Colonic mucosa (tissue), 4 donors: ENCODE measurements at regions of chr6 and their contacts with region 1.

Region 1: DNA sequence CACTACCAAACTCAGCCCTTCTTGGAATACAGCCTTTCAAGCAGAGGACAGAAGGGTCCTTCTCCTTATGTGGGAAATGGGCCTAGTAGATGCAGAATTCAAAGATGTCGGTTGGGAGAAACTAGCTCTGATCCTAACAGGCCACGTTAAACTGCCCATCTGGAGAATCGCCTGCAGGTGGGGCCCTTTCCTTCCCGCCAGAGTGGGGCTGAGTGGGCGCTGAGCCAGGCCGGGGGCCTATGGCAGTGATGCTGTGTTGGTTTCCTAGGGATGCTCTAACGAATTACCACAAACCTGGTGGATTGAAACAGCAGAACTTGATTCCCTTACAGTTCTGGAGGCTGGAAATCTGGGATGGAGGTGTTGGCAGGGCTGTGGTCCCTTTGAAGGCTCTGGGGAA is 9.1 kb downstream of the MAPK13 start:
- DNase-seq: no peak
- H3K4me3 ChIP-seq: no peak overlapping the region
- H3K27ac ChIP-seq: no peak overlapping the region
- H3K4me1 ChIP-seq: no peaks in the 10 kb centered on the region
- H3K27me3 ChIP-seq: no peaks in the 10 kb centered on the region
- CTCF ChIP-seq: no peak

Region 2: GRCh38 chr6:36196880-36197548 is 57.6 kb after region 1 on chr6:
- intact Hi-C with region 1: loop called (anchors 5 kb)
- DNase-seq: peak; percentile 100
- H3K4me3 ChIP-seq: peak overlapping the region; percentile 53
- H3K27ac ChIP-seq: peak overlapping the region; percentile 85
- H3K4me1 ChIP-seq: peaks cover 3% of the 10 kb centered on the region
- H3K27me3 ChIP-seq: no peaks in the 10 kb centered on the region
- CTCF ChIP-seq: no peak

Region 3: DNA sequence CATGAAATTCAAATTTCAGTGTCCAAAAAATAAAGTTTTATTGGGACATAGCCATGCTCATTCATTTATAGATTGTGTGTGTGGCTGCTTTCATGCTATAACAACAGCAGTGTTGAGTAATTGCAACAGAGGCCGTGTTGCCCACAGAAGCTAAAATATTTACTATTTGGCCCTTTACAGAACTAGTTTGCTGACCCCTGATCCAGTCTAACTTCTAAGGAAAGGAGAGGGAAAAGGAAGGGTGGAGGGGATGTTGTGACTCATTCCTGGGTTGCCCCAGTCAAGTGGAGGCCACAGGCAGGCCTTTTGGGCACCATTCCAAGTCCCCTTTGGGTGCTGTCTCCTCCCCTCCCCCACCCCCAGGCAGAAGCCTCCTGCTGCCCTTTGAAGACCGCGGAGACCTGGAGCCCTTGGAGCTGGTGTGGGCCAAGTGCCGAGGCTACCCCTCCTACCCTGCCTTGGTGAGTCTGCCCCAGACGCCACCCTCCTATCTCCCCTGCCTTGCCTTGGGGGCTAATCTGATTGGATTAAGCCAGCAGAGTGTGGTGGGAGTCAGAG is 85.6 kb after region 1 on chr6:
- intact Hi-C with region 1: no loop called
- DNase-seq: no peak
- H3K4me3 ChIP-seq: no peak overlapping the region
- H3K27ac ChIP-seq: no peak overlapping the region
- H3K4me1 ChIP-seq: peaks cover 29% of the 10 kb centered on the region
- H3K27me3 ChIP-seq: no peaks in the 10 kb centered on the region
- CTCF ChIP-seq: no peak